SK-N-SH (cell line): ENCODE measurements at regions of chr11 and their contacts with region 1.

Region 1: GRCh38 chr11:102287964-102288724 is 29.1 kb upstream of the BIRC3 start:
- DNase-seq: peak; percentile 80
- H3K4me3 ChIP-seq: peak overlapping the region; percentile 38 to 48
- H3K27ac ChIP-seq: peak overlapping the region; percentile 33 to 84; a peak in 3 of 4 replicates
- H3K4me1 ChIP-seq: peaks cover 19 to 20% of the 10 kb centered on the region in 2 experiments
- H3K27me3 ChIP-seq: no peaks in the 10 kb centered on the region
- CTCF ChIP-seq: peak; percentile 76
- EP300 ChIP-seq: no peak
- RAD21 ChIP-seq: peak; percentile 88

Region 2: DNA sequence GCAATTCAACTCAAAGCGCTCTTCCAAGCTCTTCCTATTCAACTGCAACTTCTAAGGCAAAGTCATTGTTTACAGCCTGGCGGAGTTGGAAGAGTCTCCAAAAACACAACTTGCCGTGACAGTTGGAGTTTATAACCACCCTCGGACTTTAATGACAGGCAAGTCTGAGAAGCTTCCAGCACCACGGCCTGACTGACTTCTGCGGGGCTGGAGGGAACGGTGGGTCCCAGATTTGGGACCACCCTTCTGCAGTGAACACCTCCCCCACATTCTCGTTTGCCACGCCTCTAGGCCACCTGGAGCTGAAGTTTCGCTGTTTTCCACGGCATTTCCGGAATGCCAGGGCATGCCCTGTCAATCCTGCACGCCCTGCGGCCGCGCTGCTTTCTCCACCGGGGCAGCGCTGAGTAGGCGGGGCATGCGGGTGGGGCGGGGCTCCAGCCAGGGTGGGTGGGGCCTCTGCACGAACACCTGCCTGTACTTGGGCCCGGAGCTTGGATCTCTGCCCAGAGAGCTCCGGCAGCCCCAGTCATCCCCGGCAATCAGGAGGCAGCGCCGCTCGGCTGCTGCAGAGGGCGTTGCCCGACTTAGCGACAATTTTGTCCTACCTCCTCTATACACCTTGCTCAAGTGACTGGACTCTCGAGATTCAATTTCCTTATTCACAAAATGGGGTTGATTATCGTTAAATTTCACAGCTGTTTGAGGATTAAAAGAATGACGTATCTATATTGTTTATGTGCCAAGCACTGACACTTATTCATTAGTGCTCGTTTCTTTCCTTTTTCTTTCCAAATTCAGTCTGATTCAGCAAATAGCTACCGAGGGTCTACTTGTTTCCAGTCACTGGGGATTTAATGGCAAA is 19.6 kb before region 1 on chr11:
- CTCF ChIA-PET with region 1: interaction called, 14 read pairs
- POLR2A ChIA-PET with region 1: no interaction called
- DNase-seq: peak; percentile 80
- H3K4me3 ChIP-seq: peak overlapping the region; percentile 35 to 52
- H3K27ac ChIP-seq: peak overlapping the region; percentile 75 to 77; a peak in 3 of 4 replicates
- H3K4me1 ChIP-seq: peaks cover 6 to 32% of the 10 kb centered on the region in 2 experiments
- H3K27me3 ChIP-seq: no peaks in the 10 kb centered on the region
- CTCF ChIP-seq: peak; percentile 40
- EP300 ChIP-seq: no peak
- RAD21 ChIP-seq: peak; percentile 47

Region 3: GRCh38 chr11:102306048-102306585 is 18.0 kb after region 1 on chr11:
- CTCF ChIA-PET with region 1: interaction called, 21 read pairs
- POLR2A ChIA-PET with region 1: no interaction called
- DNase-seq: peak; percentile 33
- H3K4me3 ChIP-seq: no peak overlapping the region
- H3K27ac ChIP-seq: 0 out of 4 replicates have a peak overlapping the region, but pooled peaks of 1 of the 2 experiments have one; percentile 17
- H3K4me1 ChIP-seq: peaks cover 10 to 16% of the 10 kb centered on the region in 2 experiments; a peak in 3 of 4 replicates
- H3K27me3 ChIP-seq: no peaks in the 10 kb centered on the region
- CTCF ChIP-seq: peak; percentile 36
- EP300 ChIP-seq: no peak
- RAD21 ChIP-seq: peak; percentile 13; the same call in 1 of the 2 replicates

Region 4: DNA sequence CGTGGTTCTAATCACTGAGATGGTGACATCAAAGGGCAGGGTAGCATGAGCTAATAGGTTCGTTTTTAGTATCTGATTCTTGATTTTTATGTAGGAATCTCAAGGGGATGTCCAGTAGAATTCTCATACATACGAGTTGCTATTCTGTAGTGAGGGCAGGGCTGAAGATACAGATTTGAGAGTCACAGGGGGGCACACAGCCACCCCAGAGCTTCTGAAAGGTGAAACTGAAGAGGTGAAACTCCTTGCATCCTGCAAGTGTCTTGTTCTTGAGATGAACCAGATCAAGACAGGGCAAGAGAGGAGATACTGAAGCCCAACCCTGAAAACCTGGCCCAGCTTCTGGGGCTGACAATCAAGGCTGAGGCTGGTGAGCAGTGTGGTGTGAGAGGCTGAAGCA is 200.1 kb after region 1 on chr11:
- CTCF ChIA-PET with region 1: interaction called, 10 read pairs
- POLR2A ChIA-PET with region 1: no interaction called
- DNase-seq: no peak
- H3K4me3 ChIP-seq: no peak overlapping the region
- H3K27ac ChIP-seq: no peak overlapping the region
- H3K4me1 ChIP-seq: no peaks in the 10 kb centered on the region
- H3K27me3 ChIP-seq: no peaks in the 10 kb centered on the region
- CTCF ChIP-seq: no peak
- EP300 ChIP-seq: no peak
- RAD21 ChIP-seq: no peak

Region 5: GRCh38 chr11:102495161-102496042 is 207.3 kb after region 1 on chr11:
- CTCF ChIA-PET with region 1: interaction called, 17 read pairs
- POLR2A ChIA-PET with region 1: no interaction called
- DNase-seq: peak; percentile 54
- H3K4me3 ChIP-seq: no peak overlapping the region
- H3K27ac ChIP-seq: no peak overlapping the region
- H3K4me1 ChIP-seq: peaks cover 0 to 2% of the 10 kb centered on the region in 2 experiments; a peak in 1 of 4 replicates
- H3K27me3 ChIP-seq: no peaks in the 10 kb centered on the region
- CTCF ChIP-seq: peak; percentile 78
- EP300 ChIP-seq: no peak
- RAD21 ChIP-seq: peak; percentile 90